ENCODE measurements at regions of chr6 and their contacts with region 1.

Region 1: DNA sequence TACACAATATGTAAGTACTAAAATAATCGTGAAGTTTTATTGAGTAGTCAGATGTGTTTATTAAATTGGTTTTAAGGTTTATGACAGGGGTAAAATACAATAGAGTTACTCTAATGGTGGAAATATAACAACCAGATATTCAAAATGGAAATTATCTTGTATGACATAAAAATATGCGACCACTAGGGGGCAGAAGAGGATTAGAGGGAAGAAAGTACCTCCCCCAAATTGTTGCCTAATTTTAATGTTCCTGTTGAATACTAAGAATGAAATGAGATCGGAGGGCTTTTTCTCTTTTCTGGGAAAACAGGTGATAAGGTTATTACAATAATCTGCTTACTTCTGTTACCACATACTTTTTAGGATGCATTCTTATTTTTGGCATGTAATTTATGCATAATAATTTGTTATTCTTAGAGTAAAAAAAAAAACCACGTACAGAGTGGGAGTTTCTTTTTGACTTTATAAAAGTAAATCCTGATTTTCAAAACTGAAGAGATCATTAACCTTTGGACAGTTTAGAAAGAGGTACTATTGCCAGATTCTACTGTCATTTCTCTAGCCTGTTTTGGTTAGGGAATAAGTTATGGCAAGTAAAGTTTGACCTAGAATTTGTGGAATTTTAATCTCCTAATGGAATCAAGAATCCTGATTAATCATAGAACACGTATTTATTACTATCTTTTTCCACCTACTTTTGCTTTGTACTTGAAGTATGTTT is 159.2 kb downstream of the CD109 start:
- DNase-seq: no peak
- H3K4me3 ChIP-seq: peak overlapping the region; percentile 3 to 27 (median 12)
- H3K27ac ChIP-seq: peak overlapping the region in 3 of 4 donors; percentile 45 to 62 (median 57)
- H3K4me1 ChIP-seq: peaks cover 0 to 9% (median 5%) of the 10 kb centered on the region in 4 donors
- H3K27me3 ChIP-seq: no peaks in the 10 kb centered on the region
- CTCF ChIP-seq: peak; percentile 54 to 80 (median 59)
- EP300 ChIP-seq: no peak
- POLR2A ChIP-seq: no peak

Region 2: DNA sequence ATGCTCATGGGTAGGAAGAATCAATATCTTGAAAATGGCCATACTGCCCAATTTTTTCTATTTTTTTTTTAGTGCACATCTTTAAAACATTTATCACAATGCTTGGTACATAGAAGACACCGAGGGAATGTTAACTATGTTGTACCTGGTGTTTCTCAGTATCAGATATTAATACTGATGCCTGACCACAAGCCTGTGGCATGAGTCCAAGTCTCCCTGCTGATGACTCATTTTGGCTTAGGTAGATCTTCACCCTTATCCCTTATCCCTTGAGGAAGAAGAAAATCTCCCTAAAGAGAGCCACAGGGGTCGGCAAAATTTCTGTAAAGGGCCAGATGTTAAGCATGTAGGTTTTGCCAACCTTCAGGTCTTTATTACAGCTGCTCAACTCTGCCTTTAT is 144.7 kb before region 1 on chr6:
- intact Hi-C with region 1: no loop called
- DNase-seq: no peak
- H3K4me3 ChIP-seq: no peak overlapping the region
- H3K27ac ChIP-seq: peak overlapping the region in 3 of 4 donors; percentile 14 to 64 (median 59)
- H3K4me1 ChIP-seq: peaks cover 0 to 35% (median 31%) of the 10 kb centered on the region in 4 donors
- H3K27me3 ChIP-seq: no peaks in the 10 kb centered on the region
- CTCF ChIP-seq: no peak
- EP300 ChIP-seq: no peak
- POLR2A ChIP-seq: no peak

Region 3: DNA sequence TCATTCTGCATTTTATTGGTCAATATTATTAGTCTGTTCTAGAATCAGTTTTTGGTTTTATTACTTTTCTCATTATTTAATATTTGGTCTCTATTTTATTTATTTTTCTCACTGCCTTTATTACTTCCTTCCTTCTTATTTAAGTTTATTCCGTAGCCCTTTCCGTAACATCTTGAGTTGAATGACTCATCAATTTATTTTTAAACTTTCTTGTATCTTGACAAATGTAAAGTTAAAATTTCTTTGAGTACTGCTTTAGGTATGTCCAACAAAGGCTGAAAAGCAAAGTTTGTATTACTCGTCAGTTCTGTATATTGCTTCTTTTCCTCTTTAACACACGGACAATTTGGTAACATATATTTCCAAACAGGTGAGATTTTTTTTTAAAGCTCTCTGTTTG is 32.9 kb after region 1 on chr6:
- intact Hi-C with region 1: no loop called
- DNase-seq: no peak
- H3K4me3 ChIP-seq: no peak overlapping the region
- H3K27ac ChIP-seq: no peak overlapping the region
- H3K4me1 ChIP-seq: no peaks in the 10 kb centered on the region
- H3K27me3 ChIP-seq: no peaks in the 10 kb centered on the region
- CTCF ChIP-seq: no peak
- EP300 ChIP-seq: no peak
- POLR2A ChIP-seq: no peak

Region 4: DNA sequence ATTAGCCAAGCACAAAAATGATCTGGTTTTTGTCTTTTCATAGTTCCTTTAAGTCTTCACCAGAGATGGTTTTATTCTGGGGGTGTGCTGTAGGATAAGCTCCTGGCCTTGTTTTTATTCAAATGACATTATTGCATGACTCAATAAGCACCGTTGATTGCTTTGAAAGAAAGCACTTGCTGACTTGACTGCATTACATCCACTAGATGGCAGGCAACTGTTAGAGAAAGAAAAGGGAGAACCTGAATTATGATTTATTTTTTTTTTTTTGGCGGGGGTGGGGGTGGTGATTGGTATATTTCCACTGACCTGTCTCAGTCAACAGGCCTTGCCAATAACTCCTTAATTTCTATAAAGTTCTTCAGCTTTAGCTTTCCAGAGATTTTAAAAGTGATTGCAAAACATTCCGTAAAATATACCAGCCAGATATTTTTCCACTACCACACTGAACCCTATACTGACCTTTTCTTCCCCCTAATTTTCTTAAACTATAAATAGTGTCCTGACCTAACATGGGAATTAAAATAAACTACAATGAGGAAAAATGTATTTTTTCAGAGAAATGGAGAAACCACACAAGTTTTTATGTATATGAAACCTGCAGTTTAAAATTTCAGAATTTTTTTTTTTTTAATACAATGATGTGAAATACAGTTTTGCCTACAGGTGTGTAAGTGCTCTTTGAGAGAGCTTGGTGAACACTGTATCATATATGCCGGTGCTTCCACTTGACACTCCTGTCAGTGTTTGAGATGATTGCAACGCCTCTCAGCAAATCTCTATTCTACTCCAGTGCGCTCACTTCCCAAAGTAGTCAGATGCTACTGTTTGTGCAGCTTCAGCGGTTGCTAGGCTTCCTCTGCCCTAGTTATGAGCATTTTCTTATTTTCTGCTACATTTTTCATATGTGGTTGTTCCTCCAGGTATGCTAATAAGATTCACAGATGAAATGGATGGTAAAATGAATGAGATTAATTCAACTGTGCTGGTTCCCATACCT is 115.1 kb after region 1 on chr6:
- intact Hi-C with region 1: loop called (anchors 10 kb)
- DNase-seq: no peak
- H3K4me3 ChIP-seq: no peak overlapping the region
- H3K27ac ChIP-seq: no peak overlapping the region
- H3K4me1 ChIP-seq: peaks cover 0 to 31% (median 16%) of the 10 kb centered on the region in 4 donors
- H3K27me3 ChIP-seq: no peaks in the 10 kb centered on the region
- CTCF ChIP-seq: peak; percentile 30 to 61 (median 46)
- EP300 ChIP-seq: no peak
- POLR2A ChIP-seq: no peak

Region 5: DNA sequence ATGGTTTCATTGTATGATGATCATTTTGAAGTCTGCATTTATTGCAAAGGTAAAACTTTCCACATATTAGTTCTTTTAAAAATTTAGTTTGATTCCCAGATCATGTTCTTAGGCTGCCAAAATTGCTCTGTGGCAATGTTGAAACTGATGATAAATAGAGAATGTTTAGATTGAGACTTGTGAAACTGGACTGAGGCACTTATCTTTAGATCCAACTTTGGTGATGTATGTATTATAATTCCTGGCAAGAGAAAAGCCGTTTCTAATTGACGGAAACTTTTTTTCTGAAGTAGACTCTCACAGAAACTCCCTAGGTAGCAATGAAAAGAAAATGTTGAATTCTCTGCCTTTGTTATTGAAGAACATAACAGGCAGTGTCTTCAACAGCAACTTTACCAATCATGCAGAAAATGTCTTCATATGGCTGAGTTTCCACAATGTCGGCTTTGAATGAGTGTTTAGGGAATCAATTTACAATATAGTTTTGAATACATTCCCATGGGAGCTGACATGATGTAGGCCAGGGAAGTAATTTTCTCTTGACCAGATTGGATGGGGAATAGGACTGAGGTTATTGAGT is 297.0 kb after region 1 on chr6:
- intact Hi-C with region 1: no loop called
- DNase-seq: no peak
- H3K4me3 ChIP-seq: no peak overlapping the region
- H3K27ac ChIP-seq: no peak overlapping the region
- H3K4me1 ChIP-seq: no peaks in the 10 kb centered on the region
- H3K27me3 ChIP-seq: no peaks in the 10 kb centered on the region
- CTCF ChIP-seq: no peak
- EP300 ChIP-seq: no peak
- POLR2A ChIP-seq: no peak